Activated CD4-positive, alpha-beta memory T cell treated with anti-CD3 and anti-CD28 coated beads for 36 hours (primary cell): ENCODE measurements at regions of chr15 and their contacts with region 1.

Region 1: DNA sequence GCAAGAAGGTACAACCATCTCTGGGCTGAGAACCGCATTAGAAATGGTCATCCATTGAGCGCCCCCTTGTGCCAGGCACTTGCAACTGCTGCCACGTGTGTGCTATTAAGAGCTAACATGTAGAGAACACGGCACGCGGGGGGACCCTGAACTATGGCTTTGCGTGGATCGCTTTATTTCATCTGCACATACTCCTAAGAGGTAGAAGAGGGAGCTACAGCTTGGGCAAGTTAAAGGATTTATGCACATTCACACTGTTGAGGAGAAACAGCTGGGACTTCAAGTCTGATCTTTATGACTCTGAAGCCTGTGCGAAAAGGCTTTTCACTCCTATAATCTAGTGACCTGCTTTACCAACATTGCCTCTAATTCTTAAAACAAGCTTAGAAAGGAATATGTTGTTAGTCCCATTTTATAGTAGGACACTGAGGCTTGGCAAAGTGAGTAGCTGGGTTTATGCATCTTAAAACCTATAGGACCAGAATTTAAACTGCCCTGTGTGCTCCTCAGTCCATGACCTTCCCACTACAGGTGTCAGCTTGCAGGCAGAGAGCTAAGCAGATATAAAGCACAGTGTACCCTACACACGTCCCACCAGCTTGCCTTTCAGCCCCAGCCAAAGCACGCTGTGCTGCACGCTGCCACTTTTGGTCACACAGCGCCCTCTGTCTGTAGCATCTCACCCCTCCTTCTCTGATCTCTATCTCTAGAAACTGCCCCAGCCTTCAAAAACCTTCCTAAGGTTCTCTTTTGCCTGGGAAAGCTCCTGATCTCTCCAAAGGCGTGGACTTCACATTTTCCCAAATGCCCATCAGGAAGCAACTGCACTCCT is 57.8 kb downstream of the STARD5 start:
- DNase-seq: peak; percentile 90
- H3K4me3 Mint-ChIP-seq: peak overlapping the region; percentile 54
- H3K27ac Mint-ChIP-seq: no peak overlapping the region
- H3K4me1 Mint-ChIP-seq: peaks cover 18% of the 10 kb centered on the region
- H3K27me3 Mint-ChIP-seq: peaks cover 8% of the 10 kb centered on the region

Region 2: GRCh38 chr15:80567721-80568157 is 698.4 kb before region 1 on chr15:
- CTCF ChIA-PET with region 1: interaction called, 14 read pairs
- POLR2A ChIA-PET with region 1: no interaction called
- intact Hi-C with region 1: no loop called
- DNase-seq: peak; percentile 29
- H3K4me3 Mint-ChIP-seq: no peak overlapping the region
- H3K27ac Mint-ChIP-seq: no peak overlapping the region
- H3K4me1 Mint-ChIP-seq: peaks cover 3% of the 10 kb centered on the region
- H3K27me3 Mint-ChIP-seq: peaks cover 25% of the 10 kb centered on the region

Region 3: DNA sequence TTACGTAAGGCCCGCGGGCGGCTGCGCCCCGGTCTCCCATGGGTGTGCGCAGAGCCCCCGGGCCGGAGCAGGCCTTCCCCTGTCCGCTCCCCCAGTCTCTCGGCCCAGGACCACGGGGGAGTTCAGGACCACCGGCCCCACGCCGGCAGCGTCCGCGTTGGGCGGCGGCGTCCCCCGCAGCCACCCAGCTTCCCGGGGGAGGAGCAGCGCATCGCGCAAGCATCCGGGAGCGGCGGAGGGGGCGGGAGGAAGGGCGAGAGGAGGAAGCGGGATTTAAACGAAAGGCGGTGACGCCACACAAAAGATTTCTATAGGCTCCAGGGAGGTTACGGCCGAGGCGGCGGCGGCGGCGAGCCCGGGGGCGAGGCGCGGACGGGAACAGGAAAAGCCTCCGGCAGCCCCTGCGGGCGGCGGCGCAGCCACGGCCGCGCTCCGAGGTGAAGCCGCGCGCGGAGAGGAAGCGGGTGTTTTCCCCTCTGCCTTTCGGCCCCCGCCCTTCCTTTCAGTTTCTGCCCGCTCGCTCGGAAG is 265.5 kb before region 1 on chr15 and contains the start of gene TLNRD1:
- CTCF ChIA-PET with region 1: interaction called, 53 read pairs
- POLR2A ChIA-PET with region 1: interaction called, 6 read pairs
- intact Hi-C with region 1: loop called (anchors 1 kb)
- DNase-seq: peak; percentile 92
- H3K4me3 Mint-ChIP-seq: peak within 1 kb of the TSS; percentile 97
- H3K27ac Mint-ChIP-seq: peak within 1 kb of the TSS; percentile 99
- H3K4me1 Mint-ChIP-seq: peaks cover 42% of the 10 kb centered on the region
- H3K27me3 Mint-ChIP-seq: no peaks in the 10 kb centered on the region
- total RNA-seq, gene TLNRD1: 23.5 to 25.4 TPM

Region 4: DNA sequence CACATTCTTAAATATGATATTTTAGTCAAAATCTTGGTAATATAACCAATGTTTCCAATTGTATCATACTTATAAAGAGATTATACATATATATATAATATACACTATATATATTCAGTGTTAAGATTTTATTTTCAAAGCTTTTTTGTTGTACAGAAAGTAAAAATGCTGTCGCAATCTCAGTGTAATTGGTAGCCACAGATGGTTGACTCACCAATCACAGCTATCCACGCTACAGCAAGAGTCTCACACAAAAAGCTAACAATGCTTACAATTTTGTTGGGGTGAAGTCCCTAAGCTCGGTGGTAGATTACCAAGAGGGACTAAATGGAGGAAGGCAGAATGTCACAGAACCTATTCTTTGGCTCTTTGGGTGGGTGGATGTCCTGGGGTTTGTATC is 149.0 kb before region 1 on chr15:
- CTCF ChIA-PET with region 1: interaction called, 44 read pairs
- POLR2A ChIA-PET with region 1: no interaction called
- intact Hi-C with region 1: no loop called
- DNase-seq: no peak
- H3K4me3 Mint-ChIP-seq: no peak overlapping the region
- H3K27ac Mint-ChIP-seq: no peak overlapping the region
- H3K4me1 Mint-ChIP-seq: no peaks in the 10 kb centered on the region
- H3K27me3 Mint-ChIP-seq: peaks cover 32% of the 10 kb centered on the region

Region 5: GRCh38 chr15:81286621-81287121 is 20.5 kb after region 1 on chr15:
- CTCF ChIA-PET with region 1: interaction called, 54 read pairs
- POLR2A ChIA-PET with region 1: no interaction called
- intact Hi-C with region 1: no loop called
- DNase-seq: no peak
- H3K4me3 Mint-ChIP-seq: peak overlapping the region; percentile 58
- H3K27ac Mint-ChIP-seq: peak overlapping the region; percentile 88
- H3K4me1 Mint-ChIP-seq: peaks cover 68% of the 10 kb centered on the region
- H3K27me3 Mint-ChIP-seq: no peaks in the 10 kb centered on the region

Region 6: GRCh38 chr15:81330366-81331090 is 64.4 kb after region 1 on chr15:
- CTCF ChIA-PET with region 1: interaction called, 37 read pairs
- POLR2A ChIA-PET with region 1: no interaction called
- intact Hi-C with region 1: no loop called
- DNase-seq: no peak
- H3K4me3 Mint-ChIP-seq: no peak overlapping the region
- H3K27ac Mint-ChIP-seq: no peak overlapping the region
- H3K4me1 Mint-ChIP-seq: no peaks in the 10 kb centered on the region
- H3K27me3 Mint-ChIP-seq: no peaks in the 10 kb centered on the region

Region 7: DNA sequence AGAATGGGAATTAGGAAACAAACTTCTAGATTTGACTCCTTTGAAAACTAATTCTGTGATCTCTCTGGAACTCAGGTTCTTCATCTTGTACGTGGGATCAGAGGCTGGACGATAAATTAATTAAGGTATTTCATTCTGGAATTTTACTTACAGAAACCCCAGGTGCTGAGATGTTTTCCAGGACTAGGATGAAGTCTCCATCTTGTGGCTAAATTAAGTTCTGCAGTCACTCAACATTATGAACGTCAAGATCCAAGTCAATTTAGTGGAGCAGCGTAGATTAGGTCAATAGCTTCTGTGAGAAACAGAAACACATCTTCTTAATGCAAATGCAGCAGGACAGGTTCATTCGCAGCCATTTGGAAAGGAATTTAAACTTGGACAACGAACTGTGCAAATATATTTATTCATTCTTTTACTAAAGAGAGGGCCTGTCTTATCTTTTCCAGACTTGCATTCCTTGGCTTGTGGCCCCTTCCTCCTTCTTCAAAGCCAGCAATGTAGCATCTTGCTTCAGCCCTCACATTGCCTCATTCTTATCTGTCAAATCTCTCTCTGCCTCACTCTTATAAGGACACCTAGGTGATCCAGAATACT is 134.6 kb after region 1 on chr15:
- CTCF ChIA-PET with region 1: interaction called, 121 read pairs
- POLR2A ChIA-PET with region 1: no interaction called
- intact Hi-C with region 1: loop called (anchors 2 kb)
- DNase-seq: no peak
- H3K4me3 Mint-ChIP-seq: no peak overlapping the region
- H3K27ac Mint-ChIP-seq: no peak overlapping the region
- H3K4me1 Mint-ChIP-seq: no peaks in the 10 kb centered on the region
- H3K27me3 Mint-ChIP-seq: no peaks in the 10 kb centered on the region